Right cardiac atrium (tissue), 5 donors: ENCODE measurements at regions of chr10 and their contacts with region 1.

Region 1: GRCh38 chr10:36446881-36447280 is 678.5 kb upstream of the ANKRD30A start:
- DNase-seq: peak; percentile 76 to 88 (median 87)
- ATAC-seq: peak; percentile 83 to 84
- H3K4me3 ChIP-seq: no peak overlapping the region
- H3K27ac ChIP-seq: peak overlapping the region; percentile 3
- H3K4me1 ChIP-seq: peaks cover 2% of the 10 kb centered on the region
- H3K27me3 ChIP-seq: no peaks in the 10 kb centered on the region

Region 2: GRCh38 chr10:36164556-36165504 is 282.1 kb before region 1 on chr10:
- intact Hi-C with region 1: loop called in 1 of 4 experiments (anchors 5 kb)
- DNase-seq: peak in 1 of 3 donors; percentile 40
- ATAC-seq: peak; percentile 89 to 95
- H3K4me3 ChIP-seq: no peak overlapping the region
- H3K27ac ChIP-seq: no peak overlapping the region
- H3K4me1 ChIP-seq: no peaks in the 10 kb centered on the region
- H3K27me3 ChIP-seq: no peaks in the 10 kb centered on the region

Region 3: DNA sequence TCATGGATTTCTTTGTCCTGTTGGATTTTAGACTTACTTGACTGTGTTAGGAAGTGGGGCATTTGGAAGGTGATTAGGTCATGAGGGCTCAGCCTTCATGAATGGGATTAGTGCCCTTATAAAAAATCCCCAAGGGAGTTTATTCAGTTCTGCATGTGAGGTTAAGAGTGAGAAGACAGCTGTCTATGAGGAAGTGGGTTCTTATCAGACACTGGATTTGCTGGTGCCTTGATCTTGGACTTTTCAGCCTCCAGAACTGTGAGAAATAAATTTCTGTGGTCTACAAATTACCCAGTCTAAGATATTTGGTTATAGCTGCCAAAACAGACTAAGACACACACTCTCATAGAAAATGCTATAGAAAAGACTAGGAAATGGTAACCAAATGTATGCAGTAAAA is 80.0 kb before region 1 on chr10:
- intact Hi-C with region 1: no loop called
- DNase-seq: no peak
- ATAC-seq: no peak
- H3K4me3 ChIP-seq: no peak overlapping the region
- H3K27ac ChIP-seq: no peak overlapping the region
- H3K4me1 ChIP-seq: no peaks in the 10 kb centered on the region
- H3K27me3 ChIP-seq: no peaks in the 10 kb centered on the region

Region 4: DNA sequence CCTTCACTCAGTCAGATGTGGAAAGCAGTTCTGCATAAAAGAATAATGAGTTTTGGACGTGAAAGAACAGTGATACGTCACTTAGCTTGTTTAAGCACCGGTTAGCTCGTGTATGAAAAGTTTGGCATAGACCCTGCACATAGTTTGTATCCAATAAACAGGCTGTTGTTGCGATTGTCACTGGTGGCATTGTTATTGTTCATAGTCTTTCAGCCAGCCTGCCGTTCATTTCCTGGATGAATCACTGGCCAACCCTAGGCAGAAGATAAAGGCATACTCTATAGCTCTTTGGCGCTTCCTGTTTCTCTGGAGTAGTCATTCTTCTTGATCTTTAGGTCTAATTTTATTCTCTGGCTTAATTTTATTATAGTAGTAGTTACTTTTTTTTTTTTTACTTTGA is 620.7 kb after region 1 on chr10:
- intact Hi-C with region 1: no loop called
- DNase-seq: no peak
- ATAC-seq: no peak
- H3K4me3 ChIP-seq: no peak overlapping the region
- H3K27ac ChIP-seq: no peak overlapping the region
- H3K4me1 ChIP-seq: no peaks in the 10 kb centered on the region
- H3K27me3 ChIP-seq: no peaks in the 10 kb centered on the region